ENCODE measurements at regions of chr12 and their contacts with region 1.

Region 1: GRCh38 chr12:74317078-74317601 is 220.5 kb upstream of the ATXN7L3B start:
- DNase-seq: peak; percentile 93
- H3K4me3 ChIP-seq: no peak overlapping the region
- H3K27ac ChIP-seq: peak overlapping the region; percentile 93
- H3K4me1 ChIP-seq: peaks cover 64% of the 10 kb centered on the region
- H3K27me3 ChIP-seq: no peaks in the 10 kb centered on the region
- CTCF ChIP-seq: peak; percentile 72

Region 2: DNA sequence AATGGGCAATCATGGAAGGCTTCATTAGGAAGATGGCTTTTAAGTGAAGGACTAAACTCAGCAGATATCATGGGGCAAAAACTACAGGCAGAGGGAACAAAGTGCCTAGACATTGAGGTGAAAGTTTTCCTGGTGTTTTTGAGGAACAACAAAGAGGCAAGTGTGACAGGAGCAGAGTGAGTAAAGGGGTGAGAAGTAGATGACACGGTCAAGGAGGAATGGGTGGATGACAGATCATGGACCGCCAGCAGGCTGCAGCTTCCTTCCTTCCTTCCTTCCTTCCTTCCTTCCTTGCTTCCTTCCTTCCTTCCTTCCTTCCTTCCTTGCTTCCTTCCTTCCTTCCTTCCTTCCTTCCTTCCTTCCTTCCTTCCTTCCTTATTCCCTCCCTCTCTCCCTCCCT is 1936.7 kb before region 1 on chr12:
- CTCF ChIA-PET with region 1: no interaction called
- POLR2A ChIA-PET with region 1: no interaction called
- intact Hi-C with region 1: loop called (anchors 1 kb)
- DNase-seq: peak; percentile 75
- H3K4me3 ChIP-seq: no peak overlapping the region
- H3K27ac ChIP-seq: peak overlapping the region; percentile 82
- H3K4me1 ChIP-seq: peaks cover 33% of the 10 kb centered on the region
- H3K27me3 ChIP-seq: no peaks in the 10 kb centered on the region
- CTCF ChIP-seq: no peak

Region 3: GRCh38 chr12:73935817-73936216 is 381.3 kb before region 1 on chr12:
- CTCF ChIA-PET with region 1: no interaction called
- POLR2A ChIA-PET with region 1: no interaction called
- intact Hi-C with region 1: loop called (anchors 5 kb)
- DNase-seq: peak; percentile 12
- H3K4me3 ChIP-seq: no peak overlapping the region
- H3K27ac ChIP-seq: no peak overlapping the region
- H3K4me1 ChIP-seq: no peaks in the 10 kb centered on the region
- H3K27me3 ChIP-seq: no peaks in the 10 kb centered on the region
- CTCF ChIP-seq: peak; percentile 59

Region 4: GRCh38 chr12:74365178-74365964 is 48.2 kb after region 1 on chr12:
- CTCF ChIA-PET with region 1: no interaction called
- POLR2A ChIA-PET with region 1: no interaction called
- intact Hi-C with region 1: loop called (anchors 2 kb)
- DNase-seq: peak; percentile 69
- H3K4me3 ChIP-seq: no peak overlapping the region
- H3K27ac ChIP-seq: no peak overlapping the region
- H3K4me1 ChIP-seq: no peaks in the 10 kb centered on the region
- H3K27me3 ChIP-seq: no peaks in the 10 kb centered on the region
- CTCF ChIP-seq: peak; percentile 59

Region 5: GRCh38 chr12:74537707-74538385 is 220.7 kb after region 1 on chr12 and contains the start of gene ATXN7L3B:
- CTCF ChIA-PET with region 1: no interaction called
- POLR2A ChIA-PET with region 1: no interaction called
- intact Hi-C with region 1: loop called (anchors 5 kb)
- DNase-seq: peak; percentile 98
- H3K4me3 ChIP-seq: peak within 1 kb of the TSS; percentile 88
- H3K27ac ChIP-seq: peak within 1 kb of the TSS; percentile 95
- H3K4me1 ChIP-seq: peaks cover 16% of the 10 kb centered on the region
- H3K27me3 ChIP-seq: no peaks in the 10 kb centered on the region
- CTCF ChIP-seq: no peak
- total RNA-seq, gene ATXN7L3B: 42.2 and 43.7 TPM in 2 replicates